AG04450 (cell line): ENCODE measurements at regions of chr7 and their contacts with region 1.

Region 1: DNA sequence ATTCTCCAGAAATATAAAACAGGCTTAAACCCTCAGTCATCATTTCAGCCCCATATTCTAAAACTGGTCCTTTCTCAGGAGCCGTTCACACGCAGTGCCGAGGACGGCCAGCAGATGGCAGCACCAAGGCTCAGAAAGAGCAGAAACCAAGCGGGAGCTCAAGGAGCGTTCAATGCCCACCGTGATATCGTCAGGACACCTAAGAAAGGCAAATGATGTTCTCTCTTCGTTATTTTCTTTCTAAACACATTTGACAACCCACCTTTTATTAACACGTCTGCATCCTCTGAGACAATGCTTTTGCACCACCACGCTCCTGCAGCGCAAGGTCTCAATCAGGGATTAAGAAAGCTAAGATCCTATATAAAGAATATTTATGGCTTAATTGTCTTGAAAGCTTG is 45.7 kb upstream of the RBM33 start:
- DNase-seq: peak; percentile 27
- H3K4me3 ChIP-seq: no peak overlapping the region
- H3K27ac ChIP-seq: no peak overlapping the region
- H3K27me3 ChIP-seq: no peaks in the 10 kb centered on the region
- CTCF ChIP-seq: peak; percentile 99

Region 2: GRCh38 chr7:154927624-154928143 is 671.1 kb before region 1 on chr7:
- CTCF ChIA-PET with region 1: interaction called, 17 read pairs
- POLR2A ChIA-PET with region 1: no interaction called
- DNase-seq: peak; percentile 76
- H3K4me3 ChIP-seq: peak overlapping the region; percentile 73
- H3K27ac ChIP-seq: peak overlapping the region; percentile 47
- H3K27me3 ChIP-seq: no peaks in the 10 kb centered on the region
- CTCF ChIP-seq: peak; percentile 71

Region 3: DNA sequence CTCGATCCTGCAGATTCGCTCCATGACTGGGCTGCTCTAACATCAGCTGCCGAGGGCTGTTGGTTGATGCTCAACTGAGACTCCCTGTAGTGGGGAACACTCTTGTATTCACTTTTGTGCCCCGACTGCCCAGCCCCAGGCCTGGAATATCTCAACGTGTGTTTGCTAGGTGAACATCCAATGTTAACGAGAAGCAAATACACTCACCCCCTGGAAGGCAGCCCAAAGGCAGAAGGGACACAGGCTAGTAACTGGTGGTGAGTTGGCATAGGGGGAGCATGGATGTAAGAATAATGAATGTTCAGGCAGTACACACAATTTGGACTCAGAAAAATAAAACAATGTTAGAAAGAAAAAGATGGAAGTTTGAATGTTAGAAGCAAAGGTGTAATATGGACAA is 21.7 kb after region 1 on chr7:
- CTCF ChIA-PET with region 1: interaction called, 18 read pairs
- POLR2A ChIA-PET with region 1: no interaction called
- DNase-seq: no peak
- H3K4me3 ChIP-seq: no peak overlapping the region
- H3K27ac ChIP-seq: no peak overlapping the region
- H3K27me3 ChIP-seq: peaks cover 3% of the 10 kb centered on the region
- CTCF ChIP-seq: no peak

Region 4: GRCh38 chr7:155702616-155703015 is 103.8 kb after region 1 on chr7:
- CTCF ChIA-PET with region 1: interaction called, 23 read pairs
- POLR2A ChIA-PET with region 1: no interaction called
- DNase-seq: no peak
- H3K4me3 ChIP-seq: no peak overlapping the region
- H3K27ac ChIP-seq: no peak overlapping the region
- H3K27me3 ChIP-seq: no peaks in the 10 kb centered on the region
- CTCF ChIP-seq: no peak

Region 5: GRCh38 chr7:155738652-155739537 is 140.1 kb after region 1 on chr7:
- CTCF ChIA-PET with region 1: interaction called, 257 read pairs
- POLR2A ChIA-PET with region 1: no interaction called
- DNase-seq: peak; percentile 59
- H3K4me3 ChIP-seq: no peak overlapping the region
- H3K27ac ChIP-seq: no peak overlapping the region
- H3K27me3 ChIP-seq: no peaks in the 10 kb centered on the region
- CTCF ChIP-seq: peak; percentile 71

Region 6: GRCh38 chr7:155769701-155770100 is 170.9 kb after region 1 on chr7:
- CTCF ChIA-PET with region 1: interaction called, 145 read pairs
- POLR2A ChIA-PET with region 1: no interaction called
- DNase-seq: no peak
- H3K4me3 ChIP-seq: no peak overlapping the region
- H3K27ac ChIP-seq: no peak overlapping the region
- H3K27me3 ChIP-seq: no peaks in the 10 kb centered on the region
- CTCF ChIP-seq: no peak

Region 7: GRCh38 chr7:156055206-156055822 is 456.5 kb after region 1 on chr7:
- CTCF ChIA-PET with region 1: no interaction called
- POLR2A ChIA-PET with region 1: no interaction called
- DNase-seq: no peak
- H3K4me3 ChIP-seq: no peak overlapping the region
- H3K27ac ChIP-seq: no peak overlapping the region
- H3K27me3 ChIP-seq: no peaks in the 10 kb centered on the region
- CTCF ChIP-seq: no peak